Activated T-helper 1 cell treated with anti-CD3 and anti-CD28 coated beads, Interleukin-12 subunit alpha, Interleukin-12 subunit beta, Interleukin-2, Interleukin-4 antibody, amounts not matched to agents 30 ng/mL and 10 ng/mL and 1 ng/mL, durations not matched to agents 14 hours and 24 hours and 36 hours (primary cell): ENCODE measurements at regions of chr2 and their contacts with region 1.

Region 1: GRCh38 chr2:161954103-161954502 is 119.9 kb downstream of the DPP4 start:
- DNase-seq: no peak
- H3K4me3 Mint-ChIP-seq: peak overlapping the region; percentile 19
- H3K27ac Mint-ChIP-seq: peak overlapping the region; percentile 93
- H3K4me1 Mint-ChIP-seq: peaks cover 80% of the 10 kb centered on the region
- H3K27me3 Mint-ChIP-seq: no peaks in the 10 kb centered on the region

Region 2: GRCh38 chr2:161238560-161239325 is 715.4 kb before region 1 on chr2:
- intact Hi-C with region 1: loop called (anchors 5 kb)
- DNase-seq: peak; percentile 47
- H3K4me3 Mint-ChIP-seq: peak overlapping the region; percentile 83
- H3K27ac Mint-ChIP-seq: peak overlapping the region; percentile 73
- H3K4me1 Mint-ChIP-seq: peaks cover 58% of the 10 kb centered on the region
- H3K27me3 Mint-ChIP-seq: no peaks in the 10 kb centered on the region

Region 3: GRCh38 chr2:161576421-161576820 is 377.7 kb before region 1 on chr2:
- intact Hi-C with region 1: no loop called
- DNase-seq: no peak
- H3K4me3 Mint-ChIP-seq: no peak overlapping the region
- H3K27ac Mint-ChIP-seq: no peak overlapping the region
- H3K4me1 Mint-ChIP-seq: no peaks in the 10 kb centered on the region
- H3K27me3 Mint-ChIP-seq: peaks cover 3% of the 10 kb centered on the region

Region 4: GRCh38 chr2:161974461-161974860 is 20.4 kb after region 1 on chr2:
- intact Hi-C with region 1: loop called (anchors 1 kb)
- DNase-seq: no peak
- H3K4me3 Mint-ChIP-seq: peak overlapping the region; percentile 23
- H3K27ac Mint-ChIP-seq: peak overlapping the region; percentile 80
- H3K4me1 Mint-ChIP-seq: peaks cover 88% of the 10 kb centered on the region
- H3K27me3 Mint-ChIP-seq: no peaks in the 10 kb centered on the region

Region 5: GRCh38 chr2:162013514-162014475 is 59.7 kb after region 1 on chr2:
- intact Hi-C with region 1: loop called (anchors 1 kb)
- DNase-seq: no peak
- H3K4me3 Mint-ChIP-seq: peak overlapping the region; percentile 81
- H3K27ac Mint-ChIP-seq: peak overlapping the region; percentile 95
- H3K4me1 Mint-ChIP-seq: peaks cover 95% of the 10 kb centered on the region
- H3K27me3 Mint-ChIP-seq: no peaks in the 10 kb centered on the region

Region 6: DNA sequence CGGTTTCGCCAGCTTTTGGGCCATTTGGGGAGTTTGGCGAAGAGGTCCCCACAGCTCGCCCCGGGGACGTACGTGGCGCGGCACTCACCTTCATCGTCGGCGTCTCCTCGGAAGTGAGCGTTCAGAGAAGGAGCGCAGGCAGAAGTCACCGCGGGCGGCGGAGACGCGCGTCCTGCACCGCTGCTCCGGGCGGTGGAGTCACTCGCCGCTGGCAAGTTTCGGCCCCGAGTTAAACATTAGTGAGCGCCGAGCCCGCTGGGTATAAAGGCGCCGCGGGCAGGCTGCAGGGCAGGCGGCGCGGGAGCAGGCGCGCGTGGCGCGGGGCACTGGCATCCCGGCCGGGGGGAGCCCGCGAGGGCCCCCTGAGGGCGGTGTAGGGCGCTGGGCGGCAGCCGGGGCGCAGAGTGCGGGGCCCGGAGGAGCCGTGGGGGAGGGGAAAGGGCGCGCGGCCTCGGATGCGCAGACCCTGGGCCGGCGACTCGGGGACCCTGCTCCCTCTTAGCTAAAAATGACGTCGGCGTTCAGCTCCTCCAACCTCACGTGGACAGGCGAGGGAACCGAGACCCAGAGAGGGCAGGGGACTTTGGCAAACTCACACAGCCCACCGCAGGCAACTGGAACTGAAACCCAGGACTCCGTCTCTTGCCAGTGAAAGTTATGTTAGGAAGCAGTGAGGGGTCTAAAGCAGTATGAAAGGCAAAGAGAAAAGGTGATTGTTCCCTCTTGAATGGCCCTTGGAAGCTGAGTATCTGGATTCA is 120.0 kb after region 1 on chr2 and contains the start of gene DPP4:
- intact Hi-C with region 1: loop called (anchors 1 kb)
- DNase-seq: peak; percentile 42
- H3K4me3 Mint-ChIP-seq: peak within 1 kb of the TSS; percentile 98
- H3K27ac Mint-ChIP-seq: peak within 1 kb of the TSS; percentile 93
- H3K4me1 Mint-ChIP-seq: peaks cover 55% of the 10 kb centered on the region
- H3K27me3 Mint-ChIP-seq: no peaks in the 10 kb centered on the region
- total RNA-seq, gene DPP4: 94.4 and 99.9 TPM in 2 replicates

Region 7: GRCh38 chr2:162821166-162821565 is 867.1 kb after region 1 on chr2:
- intact Hi-C with region 1: no loop called
- DNase-seq: no peak
- H3K4me3 Mint-ChIP-seq: no peak overlapping the region
- H3K27ac Mint-ChIP-seq: no peak overlapping the region
- H3K4me1 Mint-ChIP-seq: no peaks in the 10 kb centered on the region
- H3K27me3 Mint-ChIP-seq: no peaks in the 10 kb centered on the region